KBM-7 (cell line): ENCODE measurements at regions of chr4 and their contacts with region 1.

Region 1: GRCh38 chr4:75995727-75996126 is 5.0 kb upstream of the SDAD1 start:
- DNase-seq: peak; percentile 81

Region 2: GRCh38 chr4:76067652-76068286 is 72.0 kb after region 1 on chr4:
- in situ Hi-C with region 1: loop called (anchors 10 kb)
- DNase-seq: peak; percentile 76